ENCODE measurements at regions of chr9 and their contacts with region 1.

Region 1: DNA sequence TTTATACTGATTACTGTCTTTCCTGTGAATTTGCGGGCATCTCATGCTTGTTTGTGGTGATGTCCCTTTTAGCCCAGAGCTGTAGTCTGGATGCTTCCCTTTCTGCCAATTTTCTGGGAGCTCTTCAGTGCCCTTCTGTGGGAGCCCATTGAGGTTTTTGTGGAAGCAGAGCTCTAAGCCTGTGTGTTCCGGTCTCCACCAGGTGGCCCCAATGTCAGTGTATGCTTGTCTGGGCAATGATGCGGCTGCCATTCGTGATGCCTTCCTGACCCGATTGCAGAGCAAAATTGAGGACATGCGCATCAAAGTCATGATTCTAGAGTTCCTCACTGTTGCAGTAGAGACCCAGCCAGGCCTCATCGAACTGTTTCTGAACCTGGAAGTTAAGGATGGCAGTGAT is 35.1 kb downstream of the SH3GLB2 start:
- DNase-seq: no peak
- H3K4me3 Mint-ChIP-seq: no peak overlapping the region
- H3K27ac Mint-ChIP-seq: no peak overlapping the region
- H3K4me1 Mint-ChIP-seq: peaks cover 3% of the 10 kb centered on the region
- H3K27me3 Mint-ChIP-seq: no peaks in the 10 kb centered on the region
- CTCF ChIP-seq: peak; percentile 29

Region 2: DNA sequence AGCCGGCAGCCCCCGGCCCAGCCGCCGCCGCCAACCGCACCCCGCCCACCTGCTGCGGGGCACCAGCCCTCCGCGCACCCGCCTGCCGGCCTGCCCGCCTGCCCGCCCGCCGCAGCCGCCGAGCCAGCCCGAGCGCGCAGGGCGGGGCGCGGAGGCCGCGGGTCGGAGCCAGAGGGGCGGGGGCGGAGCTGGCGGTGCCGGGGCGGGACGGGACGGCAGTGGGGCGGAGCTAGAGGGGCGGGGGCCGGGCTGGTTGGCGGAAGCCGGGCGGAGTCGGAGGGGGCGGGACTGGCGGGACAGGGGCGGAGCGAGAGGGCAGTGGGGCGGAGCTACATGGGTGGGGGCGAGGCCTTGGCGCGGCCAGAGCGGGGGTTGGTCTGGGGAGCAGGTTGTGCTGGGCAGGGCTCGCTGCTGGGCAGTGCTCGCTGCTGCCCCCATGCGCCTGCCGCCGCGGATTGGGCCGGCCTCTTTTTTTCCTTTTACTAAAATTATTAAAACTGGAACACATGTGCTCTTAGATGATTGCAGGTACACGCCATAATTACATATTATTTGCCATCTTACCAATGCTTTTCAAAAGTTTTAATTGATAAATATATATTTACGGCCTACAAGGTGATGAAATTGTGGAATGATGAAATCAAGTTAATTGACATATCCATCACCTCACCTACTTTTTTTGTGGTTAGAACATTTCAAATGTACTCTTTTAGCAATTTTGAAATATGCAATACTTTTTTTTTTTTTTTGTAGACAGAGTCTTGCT is 35.4 kb after region 1 on chr9 and contains the start of gene SH3GLB2:
- CTCF ChIA-PET with region 1: interaction called, 6 read pairs
- POLR2A ChIA-PET with region 1: no interaction called
- intact Hi-C with region 1: loop called (anchors 1 kb)
- DNase-seq: peak; percentile 88
- H3K4me3 Mint-ChIP-seq: peak within 1 kb of the TSS; percentile 78
- H3K27ac Mint-ChIP-seq: peak within 1 kb of the TSS; percentile 79
- H3K4me1 Mint-ChIP-seq: peaks cover 12% of the 10 kb centered on the region
- H3K27me3 Mint-ChIP-seq: no peaks in the 10 kb centered on the region
- CTCF ChIP-seq: peak; percentile 84
- total RNA-seq, gene SH3GLB2: 51.7 and 58.3 TPM in 2 replicates

Measured in MCF 10A (cell line).